ENCODE measurements at regions of chr17 and their contacts with region 1.

Region 1: DNA sequence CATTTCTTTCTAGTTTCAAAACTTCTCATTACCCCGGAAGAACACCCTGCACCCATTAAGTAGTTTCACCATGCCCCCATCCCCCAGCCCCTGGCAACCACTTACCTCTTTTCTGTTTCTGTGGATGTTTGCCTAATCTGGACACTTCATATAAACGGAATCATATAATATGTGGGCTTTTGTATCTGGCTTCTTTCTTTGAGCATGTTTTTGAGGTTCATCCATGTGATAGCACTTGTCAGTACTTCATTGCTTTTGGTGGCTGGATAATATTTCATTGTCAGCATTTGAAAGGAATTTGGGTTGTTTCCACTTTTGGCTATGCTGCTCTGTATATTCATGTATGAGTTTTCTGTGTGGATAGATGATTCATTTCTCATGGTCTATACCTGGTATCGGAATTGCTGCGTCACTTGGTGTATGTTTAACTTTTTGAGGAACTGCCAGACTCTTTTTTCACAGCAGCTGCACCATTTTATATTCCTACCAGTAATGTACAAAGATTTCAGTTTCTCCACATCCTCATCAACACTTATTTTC is 30.0 kb upstream of the SLC5A10 start:
- DNase-seq: peak; percentile 36
- H3K4me3 Mint-ChIP-seq: no peak overlapping the region
- H3K27ac Mint-ChIP-seq: peak overlapping the region; percentile 27
- H3K4me1 Mint-ChIP-seq: peaks cover 70% of the 10 kb centered on the region
- H3K27me3 Mint-ChIP-seq: no peaks in the 10 kb centered on the region

Region 2: DNA sequence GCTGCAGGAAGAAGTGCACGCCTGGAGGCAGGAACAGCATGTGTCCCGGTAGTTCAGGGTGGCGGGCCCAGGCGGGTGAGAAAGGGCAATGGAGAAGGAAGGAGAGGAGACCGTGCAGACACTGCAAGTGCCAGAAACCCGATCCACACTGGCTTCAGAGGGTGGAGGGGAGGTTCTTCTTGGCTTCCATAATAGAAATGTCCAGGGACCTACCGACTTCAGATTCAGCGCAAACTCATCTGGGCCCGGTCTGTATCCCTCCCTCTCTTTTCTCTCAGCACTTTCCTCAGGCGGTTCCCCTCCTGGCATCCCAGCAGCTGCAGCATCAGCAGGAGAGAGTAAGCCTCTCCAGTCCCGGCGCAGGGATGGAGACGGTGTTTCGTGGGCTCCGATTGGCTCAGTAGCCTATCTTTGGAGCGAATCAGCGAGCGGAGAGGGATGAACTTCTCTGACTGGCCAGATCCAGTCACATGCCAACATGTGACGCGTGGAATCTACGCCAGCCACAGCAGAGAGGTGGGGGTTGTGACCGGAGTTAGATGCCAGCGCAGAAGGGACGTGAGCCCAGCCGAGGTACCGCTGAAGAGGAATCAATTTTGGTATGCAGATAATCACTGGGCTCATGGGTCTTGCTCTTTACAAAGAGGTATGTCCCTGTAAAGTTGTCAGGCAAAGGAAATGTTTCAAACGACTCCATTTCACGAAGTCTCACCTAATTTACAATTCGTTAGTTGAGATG is 66.0 kb before region 1 on chr17:
- CTCF ChIA-PET with region 1: no interaction called
- intact Hi-C with region 1: loop called (anchors 1 kb)
- DNase-seq: peak; percentile 95
- H3K4me3 Mint-ChIP-seq: peak overlapping the region; percentile 86
- H3K27ac Mint-ChIP-seq: peak overlapping the region; percentile 73
- H3K4me1 Mint-ChIP-seq: peaks cover 38% of the 10 kb centered on the region
- H3K27me3 Mint-ChIP-seq: no peaks in the 10 kb centered on the region

Region 3: GRCh38 chr17:18992454-18993130 is 70.6 kb after region 1 on chr17:
- CTCF ChIA-PET with region 1: no interaction called
- intact Hi-C with region 1: no loop called
- DNase-seq: no peak
- H3K4me3 Mint-ChIP-seq: no peak overlapping the region
- H3K27ac Mint-ChIP-seq: no peak overlapping the region
- H3K4me1 Mint-ChIP-seq: peaks cover 20% of the 10 kb centered on the region
- H3K27me3 Mint-ChIP-seq: no peaks in the 10 kb centered on the region

Region 4: DNA sequence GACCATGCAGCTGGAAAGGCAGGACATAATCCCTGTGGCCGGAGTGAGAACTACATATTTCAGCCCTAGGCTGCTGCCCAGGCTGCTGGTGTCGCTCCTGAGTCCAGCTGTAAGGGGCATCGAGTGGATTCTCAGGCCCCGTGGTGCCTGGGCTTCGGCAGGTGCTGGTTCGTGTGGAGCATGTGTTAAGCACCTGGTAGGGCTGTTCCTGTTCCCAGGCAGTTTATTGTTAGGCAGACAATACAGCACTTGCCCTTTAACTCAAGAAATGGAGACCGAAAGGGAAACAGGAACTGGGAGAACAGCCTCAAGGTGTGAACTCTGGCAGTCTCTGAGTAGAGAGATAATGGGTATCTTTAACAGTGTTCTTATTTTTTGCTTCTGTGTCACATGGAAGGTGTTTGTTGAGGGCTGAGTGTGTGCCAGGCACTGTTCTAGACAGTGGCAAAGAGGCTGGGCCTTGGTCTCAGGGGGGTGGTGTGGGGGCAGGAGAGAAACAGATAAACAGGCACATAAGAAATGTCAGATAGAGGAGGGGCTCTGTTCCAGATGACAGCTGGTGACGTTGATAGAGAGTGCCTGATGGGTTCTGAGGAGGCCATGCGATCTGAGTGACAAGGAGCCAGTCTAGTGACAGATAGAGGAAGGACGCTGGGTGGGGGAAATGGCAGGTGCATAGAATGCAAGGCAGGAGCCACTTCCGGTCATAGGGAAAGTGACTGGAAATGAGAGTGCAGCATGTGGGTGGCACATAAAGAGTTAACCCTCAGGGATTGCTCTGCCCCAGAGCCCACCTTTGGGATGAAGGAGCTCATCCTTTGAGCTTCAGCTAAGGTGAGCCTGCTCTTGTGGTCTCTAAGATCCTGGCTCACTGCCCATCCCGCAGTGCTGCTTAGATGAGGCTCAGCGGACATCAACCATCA is 349.0 kb after region 1 on chr17:
- CTCF ChIA-PET with region 1: no interaction called
- intact Hi-C with region 1: no loop called
- DNase-seq: no peak
- H3K4me3 Mint-ChIP-seq: no peak overlapping the region
- H3K27ac Mint-ChIP-seq: no peak overlapping the region
- H3K4me1 Mint-ChIP-seq: no peaks in the 10 kb centered on the region
- H3K27me3 Mint-ChIP-seq: peaks cover 11% of the 10 kb centered on the region

Measured in activated naive CD4-positive, alpha-beta T cell treated with anti-CD3 and anti-CD28 coated beads for 36 hours (primary cell).